Psoas muscle (tissue), 8 donors: ENCODE measurements at regions of chr1 and their contacts with region 1.

Region 1: DNA sequence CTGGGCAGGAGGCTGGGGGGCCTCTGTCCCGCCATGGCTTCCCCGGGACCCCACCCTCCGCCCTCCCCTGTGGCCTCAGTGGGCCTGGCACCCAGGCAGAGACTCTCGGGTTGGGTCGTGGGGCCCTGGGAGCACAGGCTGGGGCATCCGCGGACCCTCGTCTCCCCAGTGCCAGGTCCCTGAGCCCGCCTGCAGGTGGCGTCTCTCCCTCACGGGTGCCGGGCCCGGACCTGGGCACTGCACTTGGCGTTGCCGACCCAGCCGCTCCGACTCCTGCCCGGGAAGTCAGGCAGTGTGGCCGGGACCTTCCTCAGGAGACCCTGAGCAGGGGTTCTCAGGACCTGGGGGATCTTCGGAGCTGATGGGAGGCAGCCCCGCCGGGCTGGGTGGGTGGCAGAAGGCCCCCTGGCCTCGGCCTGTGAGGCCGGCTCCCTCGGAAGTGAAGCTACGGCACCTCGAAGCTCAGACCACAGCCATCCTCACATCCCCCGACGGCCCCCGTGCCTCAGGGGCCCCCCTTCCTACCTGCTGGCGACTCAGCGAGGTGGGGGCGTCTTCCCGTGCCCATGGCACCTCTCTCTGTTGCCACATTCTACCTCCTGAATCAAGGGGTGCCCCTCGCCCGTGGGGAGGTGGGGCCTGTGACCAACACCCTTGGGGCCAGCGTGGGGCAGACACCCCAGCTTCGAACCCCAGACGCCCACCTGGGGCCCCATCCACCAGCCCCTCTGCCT is 6.4 kb upstream of the C1orf159 start:
- DNase-seq: peak; percentile 84 to 90
- ATAC-seq: peak; percentile 82 to 93 (median 86)
- H3K4me3 ChIP-seq: peak overlapping the region; percentile 41
- H3K27ac ChIP-seq: no peak overlapping the region
- H3K4me1 ChIP-seq: no peaks in the 10 kb centered on the region
- H3K27me3 ChIP-seq: peaks cover 0 to 27% (median 8%) of the 10 kb centered on the region in 3 donors
- CTCF ChIP-seq: peak; percentile 86

Region 2: GRCh38 chr1:1198791-1199305 is 76.6 kb after region 1 on chr1:
- intact Hi-C with region 1: no loop called
- DNase-seq: peak; percentile 11 to 38
- ATAC-seq: no peak
- H3K4me3 ChIP-seq: no peak overlapping the region
- H3K27ac ChIP-seq: no peak overlapping the region
- H3K4me1 ChIP-seq: no peaks in the 10 kb centered on the region
- H3K27me3 ChIP-seq: peaks cover 0 to 23% (median 3%) of the 10 kb centered on the region in 3 donors
- CTCF ChIP-seq: no peak

Region 3: GRCh38 chr1:1250786-1251284 is 128.6 kb after region 1 on chr1:
- intact Hi-C with region 1: loop called in 1 of 2 experiments (anchors 1 kb)
- DNase-seq: peak in 1 of 2 donors; percentile 14
- ATAC-seq: no peak
- H3K4me3 ChIP-seq: no peak overlapping the region
- H3K27ac ChIP-seq: no peak overlapping the region
- H3K4me1 ChIP-seq: no peaks in the 10 kb centered on the region
- H3K27me3 ChIP-seq: peaks cover 0 to 15% (median 12%) of the 10 kb centered on the region in 3 donors
- CTCF ChIP-seq: no peak

Region 4: GRCh38 chr1:1291548-1292441 is 169.6 kb after region 1 on chr1:
- intact Hi-C with region 1: loop called (anchors 1 to 2 kb)
- DNase-seq: peak; percentile 58 to 84
- ATAC-seq: peak; percentile 61 to 87 (median 74)
- H3K4me3 ChIP-seq: no peak overlapping the region
- H3K27ac ChIP-seq: no peak overlapping the region
- H3K4me1 ChIP-seq: no peaks in the 10 kb centered on the region
- H3K27me3 ChIP-seq: peaks cover 0 to 10% (median 0%) of the 10 kb centered on the region in 3 donors
- CTCF ChIP-seq: peak; percentile 61

Region 5: GRCh38 chr1:1374929-1375662 is 252.9 kb after region 1 on chr1 and contains the start of gene AURKAIP1:
- intact Hi-C with region 1: no loop called
- DNase-seq: peak; percentile 97 to 99
- ATAC-seq: peak; percentile 93 to 95 (median 94)
- H3K4me3 ChIP-seq: peak within 1 kb of the TSS; percentile 87
- H3K27ac ChIP-seq: peak within 1 kb of the TSS; percentile 90
- H3K4me1 ChIP-seq: peaks cover 32% of the 10 kb centered on the region
- H3K27me3 ChIP-seq: no peaks in the 10 kb centered on the region
- CTCF ChIP-seq: peak; percentile 29
- total RNA-seq, gene AURKAIP1: 180 to 194 (median 183) TPM